Esophagus squamous epithelium (tissue), 5 donors: ENCODE measurements at regions of chr10 and their contacts with region 1.

Region 1: DNA sequence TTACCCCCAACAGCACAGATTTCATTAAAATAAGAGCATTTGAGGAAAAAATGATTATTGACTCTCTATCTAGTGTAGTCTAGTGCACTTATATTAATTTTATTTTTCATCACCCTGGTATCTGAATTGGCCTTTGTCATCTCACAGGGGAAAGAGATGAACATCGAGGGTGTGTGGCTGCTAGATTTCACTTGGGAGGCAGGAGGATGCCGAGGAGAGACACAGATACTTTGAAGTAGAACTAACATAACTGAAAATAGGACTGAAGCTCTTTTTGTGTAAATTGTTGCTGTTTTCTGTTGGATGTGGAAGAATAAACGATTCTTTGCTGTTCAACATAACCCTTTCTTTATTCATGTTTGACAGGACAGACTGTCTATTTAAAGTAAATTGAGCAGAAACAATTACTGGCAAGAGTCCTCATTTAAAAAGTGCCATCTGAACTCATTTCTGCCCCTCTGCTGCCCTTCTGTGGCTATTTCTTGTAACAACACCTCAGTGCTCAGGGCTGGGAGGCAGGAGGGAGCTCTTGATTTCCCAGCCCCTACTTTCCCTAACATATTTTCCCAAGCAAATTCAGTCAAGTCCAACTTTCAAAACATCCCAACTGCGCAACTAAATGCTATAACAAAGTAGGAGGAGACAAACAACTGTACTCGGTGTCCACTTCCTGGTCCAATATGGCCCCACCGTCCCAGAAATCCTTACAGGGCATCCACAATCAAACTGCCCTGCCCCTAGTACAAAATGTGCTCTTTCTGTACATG is 15.6 kb downstream of the LYZL1 start:
- DNase-seq: no peak
- H3K4me3 ChIP-seq: no peak overlapping the region
- H3K27ac ChIP-seq: no peak overlapping the region
- H3K4me1 ChIP-seq: peaks cover 0 to 8% (median 0%) of the 10 kb centered on the region in 3 donors
- H3K27me3 ChIP-seq: peaks cover 0 to 27% (median 0%) of the 10 kb centered on the region in 4 donors
- CTCF ChIP-seq: peak in 5 of 6 experiments; percentile 56 to 81 (median 72)
- POLR2A ChIP-seq: no peak

Region 2: GRCh38 chr10:28631896-28632596 is 672.4 kb before region 1 on chr10:
- intact Hi-C with region 1: loop called (anchors 10 kb)
- DNase-seq: no peak
- H3K4me3 ChIP-seq: no peak overlapping the region
- H3K27ac ChIP-seq: no peak overlapping the region
- H3K4me1 ChIP-seq: peaks cover 2 to 9% (median 3%) of the 10 kb centered on the region in 3 donors
- H3K27me3 ChIP-seq: peaks cover 0 to 35% (median 0%) of the 10 kb centered on the region in 4 donors
- CTCF ChIP-seq: no peak
- POLR2A ChIP-seq: no peak

Region 3: GRCh38 chr10:28676968-28677887 is 627.2 kb before region 1 on chr10 and contains the start of gene BAMBI:
- intact Hi-C with region 1: loop called (anchors 5 kb)
- DNase-seq: peak; percentile 42
- H3K4me3 ChIP-seq: peak within 1 kb of the TSS; percentile 44 to 79 (median 68)
- H3K27ac ChIP-seq: peak within 1 kb of the TSS; percentile 32 to 64 (median 48)
- H3K4me1 ChIP-seq: peaks cover 6 to 37% (median 9%) of the 10 kb centered on the region in 3 donors
- H3K27me3 ChIP-seq: peaks cover 0 to 93% (median 2%) of the 10 kb centered on the region in 4 donors
- CTCF ChIP-seq: peak; percentile 47 to 88 (median 84)
- POLR2A ChIP-seq: peak in 3 of 4 donors; percentile 63 to 86 (median 80)
- total RNA-seq, gene BAMBI: 2.5 to 6.8 (median 4.4) TPM